ENCODE measurements at regions of chr12 and their contacts with region 1.

Region 1: DNA sequence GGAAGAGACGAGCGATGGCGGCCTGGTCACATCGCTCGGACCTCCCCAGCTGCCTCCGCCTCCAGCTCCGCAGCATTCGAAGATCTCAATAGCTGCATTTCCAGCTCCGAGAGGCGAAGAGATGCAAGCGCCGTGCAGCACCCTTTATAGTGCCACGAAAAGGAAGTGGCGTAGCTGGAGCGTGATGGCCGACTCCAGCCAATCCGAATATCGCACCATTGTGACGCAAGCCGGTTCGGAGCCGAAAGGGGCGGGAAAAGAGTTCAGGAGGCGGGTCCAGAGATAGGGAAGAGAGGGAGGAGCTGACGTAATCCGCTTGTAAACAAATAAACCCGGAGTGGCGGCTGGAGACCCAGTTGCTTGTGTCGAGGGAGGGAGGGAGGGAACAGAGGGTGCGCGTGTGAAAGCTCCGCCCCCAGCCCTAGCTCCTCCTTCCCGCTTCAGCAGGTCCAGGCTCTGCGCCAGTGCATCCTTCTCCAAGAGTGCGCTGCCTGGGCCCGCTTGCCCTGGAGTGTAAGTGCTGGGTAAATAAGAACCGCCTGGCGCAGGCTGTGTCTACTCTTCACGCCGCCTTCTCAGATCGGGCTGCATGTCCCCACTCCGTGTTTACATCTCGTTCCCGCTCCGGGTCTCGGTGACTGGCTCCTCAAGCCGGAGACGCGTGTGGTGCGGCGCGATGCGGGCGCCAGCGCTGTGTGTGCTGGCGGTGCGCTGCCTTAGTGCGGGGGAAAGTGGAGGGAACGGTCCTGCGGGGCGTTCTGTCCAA is at the start of gene BTG1:
- DNase-seq: peak; percentile 99
- ATAC-seq: peak; percentile 73
- H3K4me3 Mint-ChIP-seq: peak within 1 kb of the TSS; percentile 100
- H3K27ac Mint-ChIP-seq: peak within 1 kb of the TSS; percentile 99
- H3K4me1 Mint-ChIP-seq: peaks cover 20% of the 10 kb centered on the region
- H3K27me3 Mint-ChIP-seq: no peaks in the 10 kb centered on the region
- total RNA-seq, gene BTG1: 113 to 118 TPM

Region 2: GRCh38 chr12:91778938-91779400 is 366.9 kb before region 1 on chr12:
- CTCF ChIA-PET with region 1: no interaction called
- POLR2A ChIA-PET with region 1: interaction called, 11 read pairs
- DNase-seq: peak; percentile 49
- ATAC-seq: peak; percentile 85
- H3K4me3 Mint-ChIP-seq: peak overlapping the region; percentile 53
- H3K27ac Mint-ChIP-seq: peak overlapping the region; percentile 81
- H3K4me1 Mint-ChIP-seq: peaks cover 17% of the 10 kb centered on the region
- H3K27me3 Mint-ChIP-seq: no peaks in the 10 kb centered on the region

Region 3: DNA sequence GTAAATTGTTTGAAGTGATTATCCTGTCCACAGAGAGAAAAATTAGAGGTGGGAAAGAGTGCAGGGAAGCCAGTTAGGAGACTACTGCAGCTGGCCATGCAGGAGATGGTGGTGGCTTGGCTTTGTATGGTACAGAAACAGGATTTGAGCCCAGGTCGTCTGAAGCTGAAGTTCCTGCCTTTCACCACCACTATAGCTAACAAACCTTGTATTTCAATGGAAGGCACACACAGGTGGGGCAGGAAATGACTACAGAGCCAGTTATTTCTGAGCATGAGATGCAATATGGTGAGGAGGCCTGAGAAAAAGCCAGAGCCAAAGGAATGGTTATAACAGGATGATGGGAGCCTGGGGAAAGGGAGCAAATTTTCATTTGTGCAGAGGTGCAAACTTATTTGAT is 104.2 kb before region 1 on chr12:
- CTCF ChIA-PET with region 1: interaction called, 3 read pairs
- POLR2A ChIA-PET with region 1: interaction called, 24 read pairs
- DNase-seq: peak; percentile 45
- ATAC-seq: peak; percentile 59
- H3K4me3 Mint-ChIP-seq: no peak overlapping the region
- H3K27ac Mint-ChIP-seq: peak overlapping the region; percentile 74
- H3K4me1 Mint-ChIP-seq: peaks cover 57% of the 10 kb centered on the region
- H3K27me3 Mint-ChIP-seq: no peaks in the 10 kb centered on the region

Region 4: DNA sequence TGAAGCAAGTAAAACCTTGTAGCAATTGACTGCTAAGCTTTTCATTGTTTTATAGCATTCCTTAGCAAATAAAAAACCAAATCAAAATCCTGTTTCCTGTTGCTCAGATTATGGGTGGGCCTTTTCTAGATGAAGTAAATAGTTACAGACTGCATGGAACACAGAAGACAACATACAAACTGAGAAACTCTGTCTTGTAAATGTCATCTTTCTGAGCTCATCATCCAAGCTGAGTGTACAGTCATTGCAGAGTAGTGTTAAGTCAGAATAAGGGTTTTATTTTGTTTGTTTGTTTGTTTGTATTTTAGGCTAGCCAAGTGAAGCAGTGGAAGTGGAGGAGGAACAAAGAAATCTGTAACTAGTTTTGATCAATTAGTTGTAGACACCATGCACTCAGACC is 24.1 kb after region 1 on chr12:
- CTCF ChIA-PET with region 1: interaction called, 3 read pairs
- POLR2A ChIA-PET with region 1: interaction called, 10 read pairs
- DNase-seq: no peak
- ATAC-seq: no peak
- H3K4me3 Mint-ChIP-seq: no peak overlapping the region
- H3K27ac Mint-ChIP-seq: no peak overlapping the region
- H3K4me1 Mint-ChIP-seq: peaks cover 10% of the 10 kb centered on the region
- H3K27me3 Mint-ChIP-seq: no peaks in the 10 kb centered on the region

Region 5: DNA sequence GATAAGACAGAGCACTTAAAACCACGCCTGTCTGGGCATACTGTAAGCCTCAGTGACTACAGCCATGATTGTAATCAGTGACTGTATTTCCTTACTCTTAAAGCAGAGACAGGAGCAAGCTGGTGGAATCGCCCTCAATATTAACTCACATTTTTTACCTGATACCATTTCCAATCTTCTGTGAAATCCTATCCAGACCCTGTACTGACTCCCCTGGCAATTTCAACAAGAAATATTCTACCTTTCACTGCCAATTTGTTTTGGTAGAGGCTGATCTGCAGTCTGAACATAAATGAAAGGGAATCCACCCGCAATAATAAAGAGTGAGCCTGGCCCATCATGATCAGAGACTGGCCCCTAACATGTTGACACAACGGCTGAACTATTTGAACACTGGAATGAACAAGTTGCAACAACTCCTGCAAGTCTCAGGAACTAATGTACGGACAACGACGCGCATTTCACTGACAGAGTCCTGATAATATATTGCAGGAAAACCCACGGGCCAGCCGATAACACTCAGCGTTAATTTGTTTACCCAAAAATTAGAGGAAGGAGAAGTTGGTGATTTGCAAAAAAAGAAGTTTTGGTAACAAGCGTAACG is 195.3 kb after region 1 on chr12:
- CTCF ChIA-PET with region 1: no interaction called
- POLR2A ChIA-PET with region 1: no interaction called
- DNase-seq: no peak
- ATAC-seq: peak; percentile 47
- H3K4me3 Mint-ChIP-seq: no peak overlapping the region
- H3K27ac Mint-ChIP-seq: no peak overlapping the region
- H3K4me1 Mint-ChIP-seq: peaks cover 11% of the 10 kb centered on the region
- H3K27me3 Mint-ChIP-seq: no peaks in the 10 kb centered on the region

Region 6: GRCh38 chr12:92363295-92364146 is 217.6 kb after region 1 on chr12:
- CTCF ChIA-PET with region 1: interaction called, 13 read pairs
- POLR2A ChIA-PET with region 1: interaction called, 35 read pairs
- DNase-seq: peak; percentile 52
- ATAC-seq: peak; percentile 78
- H3K4me3 Mint-ChIP-seq: peak overlapping the region; percentile 72
- H3K27ac Mint-ChIP-seq: peak overlapping the region; percentile 84
- H3K4me1 Mint-ChIP-seq: peaks cover 48% of the 10 kb centered on the region
- H3K27me3 Mint-ChIP-seq: no peaks in the 10 kb centered on the region

Region 7: GRCh38 chr12:92424338-92424737 is 278.4 kb after region 1 on chr12:
- CTCF ChIA-PET with region 1: no interaction called
- POLR2A ChIA-PET with region 1: no interaction called
- DNase-seq: no peak
- ATAC-seq: no peak
- H3K4me3 Mint-ChIP-seq: no peak overlapping the region
- H3K27ac Mint-ChIP-seq: no peak overlapping the region
- H3K4me1 Mint-ChIP-seq: peaks cover 3% of the 10 kb centered on the region
- H3K27me3 Mint-ChIP-seq: no peaks in the 10 kb centered on the region

Region 8: DNA sequence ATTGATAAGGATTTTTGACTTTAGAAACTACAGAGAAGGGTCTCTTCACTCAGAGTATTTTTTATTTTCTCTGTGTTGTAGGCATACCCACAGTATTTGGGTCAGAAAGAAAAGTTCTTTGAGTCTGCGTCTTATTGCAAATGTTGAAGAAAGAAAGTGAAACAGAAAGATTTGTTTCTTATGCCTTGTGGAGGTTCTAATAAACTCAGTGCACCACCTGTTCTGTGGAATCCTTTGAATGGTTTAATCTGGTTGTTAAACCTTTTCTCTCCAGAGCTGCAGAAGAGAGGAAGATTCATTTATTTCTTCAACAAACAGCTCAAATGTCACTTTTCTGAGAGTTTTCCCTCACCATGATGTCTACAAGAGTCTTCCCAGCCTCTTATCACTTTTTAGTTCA is 410.2 kb after region 1 on chr12:
- CTCF ChIA-PET with region 1: interaction called, 3 read pairs
- POLR2A ChIA-PET with region 1: interaction called, 23 read pairs
- DNase-seq: no peak
- ATAC-seq: peak; percentile 67
- H3K4me3 Mint-ChIP-seq: peak overlapping the region; percentile 57
- H3K27ac Mint-ChIP-seq: peak overlapping the region; percentile 77
- H3K4me1 Mint-ChIP-seq: peaks cover 40% of the 10 kb centered on the region
- H3K27me3 Mint-ChIP-seq: no peaks in the 10 kb centered on the region

Region 9: DNA sequence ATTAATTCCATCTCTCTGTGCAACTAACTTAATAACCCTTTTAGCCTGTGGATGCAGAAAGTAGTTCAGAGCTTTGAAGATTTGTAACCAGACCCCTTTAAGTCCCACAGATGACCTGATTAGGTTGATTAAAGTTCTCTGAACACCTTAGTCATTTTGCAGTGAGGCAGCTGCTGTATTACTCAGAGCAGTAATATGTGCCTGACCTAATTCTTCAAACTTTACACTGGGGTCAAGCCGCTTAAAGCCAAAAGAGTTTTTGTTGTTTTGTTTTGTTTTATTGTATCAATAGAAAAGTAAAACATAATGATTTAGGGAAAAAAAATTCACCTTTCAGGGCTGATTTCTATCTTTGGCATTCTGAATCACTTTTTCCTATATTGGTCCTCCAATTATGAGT is 478.3 kb after region 1 on chr12:
- CTCF ChIA-PET with region 1: no interaction called
- POLR2A ChIA-PET with region 1: no interaction called
- DNase-seq: no peak
- ATAC-seq: no peak
- H3K4me3 Mint-ChIP-seq: no peak overlapping the region
- H3K27ac Mint-ChIP-seq: no peak overlapping the region
- H3K4me1 Mint-ChIP-seq: no peaks in the 10 kb centered on the region
- H3K27me3 Mint-ChIP-seq: no peaks in the 10 kb centered on the region

Region 10: GRCh38 chr12:92702754-92703679 is 557.1 kb after region 1 on chr12 and contains the start of gene PLEKHG7:
- CTCF ChIA-PET with region 1: no interaction called
- POLR2A ChIA-PET with region 1: no interaction called
- DNase-seq: no peak
- ATAC-seq: no peak
- H3K4me3 Mint-ChIP-seq: no peak within 1 kb of the TSS
- H3K27ac Mint-ChIP-seq: no peak within 1 kb of the TSS
- H3K4me1 Mint-ChIP-seq: peaks cover 8% of the 10 kb centered on the region
- H3K27me3 Mint-ChIP-seq: no peaks in the 10 kb centered on the region
- total RNA-seq, gene PLEKHG7: not detected